K562 (cell line): ENCODE measurements at regions of chr2 and their contacts with region 1.

Region 1: GRCh38 chr2:119218478-119219064 is 5.1 kb upstream of the STEAP3 start:
- DNase-seq: peak; percentile 56 to 87 (median 67)
- ATAC-seq: peak; percentile 53
- H3K4me3 ChIP-seq: no peak overlapping the region
- H3K27ac ChIP-seq: no peak overlapping the region
- H3K4me1 ChIP-seq: peaks cover 14 to 20% of the 10 kb centered on the region in 2 experiments
- H3K27me3 ChIP-seq: peaks cover 0 to 27% of the 10 kb centered on the region in 2 experiments; a peak in 2 of 5 replicates
- CTCF ChIP-seq: peak; percentile 82 to 92 (median 83)
- EP300 ChIP-seq: no peak
- POLR2A ChIP-seq: no peak
- RAD21 ChIP-seq: peak; percentile 87 to 94

Region 2: DNA sequence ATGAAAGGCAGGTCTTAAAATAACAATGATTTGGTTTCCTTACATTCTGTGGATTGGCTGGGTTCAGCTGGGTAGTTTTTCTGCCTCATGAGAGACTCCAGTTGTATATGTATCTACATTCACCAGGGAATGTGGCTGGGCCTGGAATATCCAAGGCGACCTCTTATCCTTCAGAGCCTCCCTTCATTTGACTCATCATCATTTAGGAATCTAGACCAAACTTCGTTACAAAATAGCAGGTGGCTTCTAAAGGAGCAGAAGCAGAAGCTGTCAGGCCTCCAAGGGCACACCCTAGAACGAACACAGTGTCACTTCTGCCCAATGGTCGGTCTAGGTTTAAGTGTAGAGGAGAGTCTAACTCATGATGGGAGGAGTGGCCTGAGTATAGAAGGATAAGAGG is 575.3 kb before region 1 on chr2:
- CTCF ChIA-PET with region 1: no interaction called
- POLR2A ChIA-PET with region 1: no interaction called
- in situ Hi-C with region 1: no loop called
- intact Hi-C with region 1: no loop called
- DNase-seq: no peak
- ATAC-seq: no peak
- H3K4me3 ChIP-seq: no peak overlapping the region
- H3K27ac ChIP-seq: no peak overlapping the region
- H3K4me1 ChIP-seq: no peaks in the 10 kb centered on the region
- H3K27me3 ChIP-seq: no peaks in the 10 kb centered on the region
- CTCF ChIP-seq: no peak
- EP300 ChIP-seq: no peak
- POLR2A ChIP-seq: no peak
- RAD21 ChIP-seq: no peak

Region 3: GRCh38 chr2:119264781-119265692 is 46.5 kb after region 1 on chr2:
- CTCF ChIA-PET with region 1: interaction called, 3 read pairs
- POLR2A ChIA-PET with region 1: interaction called, 6 read pairs
- in situ Hi-C with region 1: no loop called
- intact Hi-C with region 1: loop called (anchors 1 kb)
- DNase-seq: peak; percentile 64 to 73 (median 68)
- ATAC-seq: peak; percentile 99
- H3K4me3 ChIP-seq: no peak overlapping the region
- H3K27ac ChIP-seq: no peak overlapping the region
- H3K4me1 ChIP-seq: peaks cover 2 to 7% of the 10 kb centered on the region in 2 experiments; a peak in 3 of 5 replicates
- H3K27me3 ChIP-seq: no peaks in the 10 kb centered on the region
- CTCF ChIP-seq: peak; percentile 76 to 85 (median 79)
- EP300 ChIP-seq: no peak
- POLR2A ChIP-seq: no peak
- RAD21 ChIP-seq: peak; percentile 61 to 75

Region 4: DNA sequence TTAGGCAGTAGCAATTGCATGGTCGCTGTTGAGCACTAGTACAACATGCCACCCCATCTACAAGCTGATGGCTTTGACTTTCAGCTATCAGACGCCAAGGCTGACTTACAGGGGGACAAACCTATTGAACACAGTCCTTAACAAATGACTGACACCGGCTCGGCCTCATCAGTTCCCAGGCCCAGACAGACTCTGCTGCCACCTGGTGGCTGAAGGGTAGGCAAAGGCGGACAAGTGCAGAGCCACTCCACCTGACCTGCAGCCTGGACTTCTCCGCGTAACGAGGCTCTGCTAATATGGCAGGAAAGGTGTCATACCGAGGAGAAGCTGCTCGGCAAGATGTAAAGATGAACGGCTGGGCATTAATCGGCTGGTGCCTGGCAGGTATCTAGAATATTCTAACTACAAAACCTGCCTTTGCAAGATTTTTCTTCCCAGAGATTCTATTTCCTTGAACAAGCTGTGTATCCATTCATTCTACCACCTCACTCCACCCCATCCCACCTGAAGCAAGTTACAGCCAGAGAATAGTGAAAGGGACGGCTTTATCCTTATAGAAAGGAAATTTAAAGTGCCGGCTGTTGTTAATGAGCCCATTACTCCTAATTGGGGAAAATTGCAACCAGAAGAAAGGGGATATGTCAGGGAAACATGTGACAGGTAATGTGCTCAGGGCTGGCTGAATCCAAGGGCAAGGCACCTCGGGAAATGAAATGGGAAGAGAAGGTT is 72.5 kb after region 1 on chr2:
- CTCF ChIA-PET with region 1: interaction called, 15 read pairs
- POLR2A ChIA-PET with region 1: no interaction called
- in situ Hi-C with region 1: no loop called
- intact Hi-C with region 1: loop called (anchors 1 kb)
- DNase-seq: peak; percentile 62 to 74 (median 67)
- ATAC-seq: peak; percentile 97
- H3K4me3 ChIP-seq: no peak overlapping the region
- H3K27ac ChIP-seq: no peak overlapping the region
- H3K4me1 ChIP-seq: no peaks in the 10 kb centered on the region; a peak in 1 of 5 replicates
- H3K27me3 ChIP-seq: peaks cover 32 to 58% of the 10 kb centered on the region in 2 experiments
- CTCF ChIP-seq: peak; percentile 79 to 83 (median 82)
- EP300 ChIP-seq: no peak
- POLR2A ChIP-seq: no peak
- RAD21 ChIP-seq: peak; percentile 65 to 89

Region 5: DNA sequence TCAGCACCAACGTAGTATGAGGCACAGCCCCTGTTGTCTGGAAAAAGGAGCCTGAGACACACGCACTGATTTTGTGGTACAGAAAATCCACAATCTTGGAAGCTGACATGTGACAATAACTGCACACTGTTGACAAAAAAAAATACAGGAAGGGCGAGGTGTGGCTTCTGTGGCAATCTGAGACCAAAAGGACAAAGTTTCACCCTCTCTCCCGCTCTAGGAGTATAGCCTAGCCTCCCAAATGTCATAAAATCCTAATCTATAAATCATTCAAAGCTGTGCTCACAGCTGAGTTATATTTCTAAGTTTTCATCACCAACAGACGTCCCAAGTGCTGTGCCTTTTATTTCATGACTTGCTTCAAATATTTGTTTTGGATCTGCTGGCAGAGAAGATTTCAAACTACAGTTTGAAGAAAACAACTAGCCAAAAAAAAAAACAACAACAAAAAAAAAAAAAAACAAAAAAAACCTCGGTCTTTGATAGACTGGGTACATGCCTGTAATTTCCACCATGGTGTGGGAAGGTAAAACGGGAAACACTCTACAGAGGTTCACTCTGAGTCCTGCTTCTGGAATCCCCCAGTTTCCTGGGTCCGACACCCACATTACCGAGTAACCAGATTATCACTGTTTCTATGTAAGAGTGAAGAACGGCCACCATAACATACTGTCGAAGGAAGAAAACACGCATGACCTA is 87.1 kb after region 1 on chr2:
- CTCF ChIA-PET with region 1: no interaction called
- POLR2A ChIA-PET with region 1: no interaction called
- in situ Hi-C with region 1: no loop called
- intact Hi-C with region 1: loop called (anchors 2 kb)
- DNase-seq: no peak
- ATAC-seq: no peak
- H3K4me3 ChIP-seq: no peak overlapping the region
- H3K27ac ChIP-seq: no peak overlapping the region
- H3K4me1 ChIP-seq: no peaks in the 10 kb centered on the region
- H3K27me3 ChIP-seq: peaks cover 0 to 11% of the 10 kb centered on the region in 2 experiments; a peak in 2 of 5 replicates
- CTCF ChIP-seq: no peak
- EP300 ChIP-seq: no peak
- POLR2A ChIP-seq: no peak
- RAD21 ChIP-seq: no peak

Region 6: DNA sequence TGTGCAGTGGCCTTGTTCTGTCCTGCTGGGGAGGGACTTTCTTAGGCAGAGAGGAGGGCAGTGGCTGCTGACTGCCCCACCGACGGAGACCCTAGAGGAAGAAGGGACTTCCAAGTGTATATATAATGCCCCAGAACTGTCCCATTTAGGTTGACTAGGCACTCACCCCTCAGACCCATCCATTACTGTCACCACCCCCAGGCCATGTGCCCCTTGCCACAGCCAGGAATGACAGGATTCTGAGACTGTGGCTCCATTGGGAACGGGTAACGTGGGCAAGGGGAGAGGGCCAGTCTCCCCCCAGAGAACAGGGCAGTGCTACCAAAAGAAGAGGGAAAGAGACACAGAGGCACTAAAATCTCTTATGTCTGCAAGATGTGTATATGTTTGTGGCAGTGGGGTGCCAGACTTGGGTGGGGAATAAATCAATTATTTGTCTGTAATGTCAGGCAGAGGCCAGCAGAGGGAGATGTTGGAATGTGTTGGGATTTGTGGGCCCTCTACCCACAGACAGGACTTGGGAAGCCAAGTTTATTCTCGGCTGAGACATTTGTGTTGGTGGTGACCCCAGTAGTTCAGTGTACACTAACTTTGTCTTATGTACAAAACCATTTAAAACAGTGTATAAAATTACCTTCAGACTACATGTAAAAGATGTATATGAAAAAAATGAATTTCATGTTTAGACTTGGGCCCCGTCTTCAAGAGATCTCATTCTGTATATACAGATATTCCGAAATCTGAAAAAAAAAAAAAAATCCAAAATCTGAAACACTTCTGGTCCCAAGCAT is 189.1 kb after region 1 on chr2:
- CTCF ChIA-PET with region 1: no interaction called
- POLR2A ChIA-PET with region 1: no interaction called
- in situ Hi-C with region 1: no loop called
- intact Hi-C with region 1: loop called (anchors 2 kb)
- DNase-seq: peak; percentile 71 to 78 (median 74)
- ATAC-seq: peak; percentile 89
- H3K4me3 ChIP-seq: no peak overlapping the region
- H3K27ac ChIP-seq: no peak overlapping the region
- H3K4me1 ChIP-seq: no peaks in the 10 kb centered on the region; a peak in 1 of 5 replicates
- H3K27me3 ChIP-seq: peaks cover 0 to 27% of the 10 kb centered on the region in 2 experiments; a peak in 2 of 5 replicates
- CTCF ChIP-seq: peak; percentile 78 to 93 (median 79)
- EP300 ChIP-seq: no peak
- POLR2A ChIP-seq: no peak
- RAD21 ChIP-seq: peak; percentile 95

Region 7: GRCh38 chr2:119476301-119477021 is 257.9 kb after region 1 on chr2:
- CTCF ChIA-PET with region 1: interaction called, 6 read pairs
- POLR2A ChIA-PET with region 1: no interaction called
- in situ Hi-C with region 1: no loop called
- intact Hi-C with region 1: loop called (anchors 2 kb)
- DNase-seq: peak; percentile 72 to 87 (median 82)
- ATAC-seq: peak; percentile 96
- H3K4me3 ChIP-seq: no peak overlapping the region
- H3K27ac ChIP-seq: no peak overlapping the region
- H3K4me1 ChIP-seq: peaks cover 4 to 5% of the 10 kb centered on the region in 2 experiments; a peak in 3 of 5 replicates
- H3K27me3 ChIP-seq: peaks cover 6 to 62% of the 10 kb centered on the region in 2 experiments; a peak in 4 of 5 replicates
- CTCF ChIP-seq: peak; percentile 90 to 94 (median 93)
- EP300 ChIP-seq: no peak
- POLR2A ChIP-seq: no peak
- RAD21 ChIP-seq: peak; percentile 96

Region 8: DNA sequence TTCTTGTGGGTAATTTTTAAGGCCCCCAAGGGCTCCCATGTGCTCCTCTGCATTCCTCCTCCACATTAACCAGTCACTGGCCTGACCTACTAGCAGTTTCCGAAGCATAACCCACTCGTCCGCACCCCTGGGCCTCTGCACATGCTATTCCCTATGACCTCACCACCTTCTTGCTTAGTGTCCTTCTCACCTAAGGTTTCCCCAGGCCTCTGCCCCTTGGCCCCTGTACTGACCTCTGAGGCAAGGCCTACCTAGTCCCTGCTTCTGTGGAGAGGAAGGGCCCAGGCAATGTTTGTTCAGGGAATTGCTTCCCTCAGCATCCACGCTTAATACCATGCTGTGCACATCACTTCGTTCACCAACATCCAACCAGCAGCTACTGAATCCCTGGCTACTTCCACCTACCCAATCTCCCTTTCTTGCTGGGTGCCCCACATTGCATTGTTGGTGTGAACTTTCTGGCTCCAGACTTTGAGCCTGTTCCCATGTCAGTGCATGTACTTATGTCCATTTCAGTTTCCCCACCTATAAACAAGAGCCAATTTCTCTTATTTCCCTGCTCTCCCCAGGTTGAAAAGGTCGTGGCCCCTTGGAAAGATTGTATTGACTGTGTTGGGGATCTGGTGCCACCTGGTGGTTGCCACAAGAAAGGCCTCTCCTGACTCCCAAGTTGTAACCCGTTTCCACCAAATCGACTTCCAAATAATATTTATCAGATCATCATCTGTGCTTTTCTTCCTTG is 441.2 kb after region 1 on chr2:
- CTCF ChIA-PET with region 1: interaction called, 4 read pairs
- POLR2A ChIA-PET with region 1: no interaction called
- in situ Hi-C with region 1: no loop called
- intact Hi-C with region 1: loop called (anchors 2 kb)
- DNase-seq: peak in 3 of 4 experiments; percentile 59 to 61 (median 61)
- ATAC-seq: peak; percentile 81
- H3K4me3 ChIP-seq: no peak overlapping the region
- H3K27ac ChIP-seq: no peak overlapping the region
- H3K4me1 ChIP-seq: no peaks in the 10 kb centered on the region
- H3K27me3 ChIP-seq: peaks cover 12 to 30% of the 10 kb centered on the region in 2 experiments; a peak in 3 of 5 replicates
- CTCF ChIP-seq: peak; percentile 80 to 88 (median 87)
- EP300 ChIP-seq: no peak
- POLR2A ChIP-seq: no peak
- RAD21 ChIP-seq: peak; percentile 81 to 85